ENCODE measurements at regions of chr15 and their contacts with region 1.

Region 1: GRCh38 chr15:89206908-89207331 is 14.5 kb downstream of the RLBP1 start:
- DNase-seq: peak; percentile 47
- ATAC-seq: peak; percentile 99
- H3K4me3 ChIP-seq: peak overlapping the region; percentile 28 to 50
- H3K27ac ChIP-seq: no peak overlapping the region
- H3K4me1 ChIP-seq: peaks cover 0 to 7% of the 10 kb centered on the region in 2 experiments; a peak in 2 of 4 replicates
- H3K27me3 ChIP-seq: no peaks in the 10 kb centered on the region
- CTCF ChIP-seq: peak; percentile 89 to 99 (median 96)
- POLR2A ChIP-seq: no peak
- RAD21 ChIP-seq: peak; percentile 91

Region 2: DNA sequence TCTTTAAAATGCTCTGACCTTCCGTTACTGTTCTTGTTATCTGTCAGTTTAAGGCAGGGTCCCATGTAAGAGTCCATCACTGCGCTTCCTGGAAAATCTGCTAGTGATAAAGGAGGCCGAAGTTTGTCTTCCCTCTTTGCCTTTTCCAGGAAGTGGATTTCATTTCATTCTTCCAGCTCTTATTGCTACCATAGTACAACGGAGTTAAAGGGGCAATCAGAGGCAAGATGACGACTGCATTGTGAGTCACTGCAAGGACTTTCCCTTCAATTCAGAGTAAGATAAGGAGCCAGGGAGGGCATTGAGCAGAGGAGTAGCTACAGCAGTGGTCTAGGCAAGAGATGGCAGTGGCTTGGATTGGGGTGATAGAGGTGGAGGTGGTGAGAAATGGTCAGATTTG is 643.3 kb before region 1 on chr15:
- CTCF ChIA-PET with region 1: no interaction called
- POLR2A ChIA-PET with region 1: no interaction called
- RAD21 ChIA-PET with region 1: no interaction called
- intact Hi-C with region 1: no loop called
- DNase-seq: no peak
- ATAC-seq: no peak
- H3K4me3 ChIP-seq: no peak overlapping the region
- H3K27ac ChIP-seq: no peak overlapping the region
- H3K4me1 ChIP-seq: no peaks in the 10 kb centered on the region
- H3K27me3 ChIP-seq: peaks cover 16% of the 10 kb centered on the region; the same call in 1 of the 2 replicates
- CTCF ChIP-seq: no peak
- POLR2A ChIP-seq: no peak
- RAD21 ChIP-seq: no peak

Region 3: GRCh38 chr15:88859550-88859949 is 347.4 kb before region 1 on chr15:
- CTCF ChIA-PET with region 1: no interaction called
- POLR2A ChIA-PET with region 1: no interaction called
- RAD21 ChIA-PET with region 1: no interaction called
- intact Hi-C with region 1: no loop called
- DNase-seq: no peak
- ATAC-seq: no peak
- H3K4me3 ChIP-seq: no peak overlapping the region
- H3K27ac ChIP-seq: no peak overlapping the region
- H3K4me1 ChIP-seq: no peaks in the 10 kb centered on the region
- H3K27me3 ChIP-seq: peaks cover 32% of the 10 kb centered on the region
- CTCF ChIP-seq: no peak
- POLR2A ChIP-seq: no peak
- RAD21 ChIP-seq: no peak

Region 4: GRCh38 chr15:89226359-89227221 is 19.7 kb after region 1 on chr15:
- CTCF ChIA-PET with region 1: interaction called, 12 read pairs
- POLR2A ChIA-PET with region 1: no interaction called
- RAD21 ChIA-PET with region 1: no interaction called
- intact Hi-C with region 1: no loop called
- DNase-seq: no peak
- ATAC-seq: peak; percentile 72
- H3K4me3 ChIP-seq: no peak overlapping the region
- H3K27ac ChIP-seq: no peak overlapping the region
- H3K4me1 ChIP-seq: peaks cover 0 to 12% of the 10 kb centered on the region in 2 experiments; a peak in 1 of 4 replicates
- H3K27me3 ChIP-seq: no peaks in the 10 kb centered on the region
- CTCF ChIP-seq: no peak
- POLR2A ChIP-seq: no peak
- RAD21 ChIP-seq: no peak

Region 5: DNA sequence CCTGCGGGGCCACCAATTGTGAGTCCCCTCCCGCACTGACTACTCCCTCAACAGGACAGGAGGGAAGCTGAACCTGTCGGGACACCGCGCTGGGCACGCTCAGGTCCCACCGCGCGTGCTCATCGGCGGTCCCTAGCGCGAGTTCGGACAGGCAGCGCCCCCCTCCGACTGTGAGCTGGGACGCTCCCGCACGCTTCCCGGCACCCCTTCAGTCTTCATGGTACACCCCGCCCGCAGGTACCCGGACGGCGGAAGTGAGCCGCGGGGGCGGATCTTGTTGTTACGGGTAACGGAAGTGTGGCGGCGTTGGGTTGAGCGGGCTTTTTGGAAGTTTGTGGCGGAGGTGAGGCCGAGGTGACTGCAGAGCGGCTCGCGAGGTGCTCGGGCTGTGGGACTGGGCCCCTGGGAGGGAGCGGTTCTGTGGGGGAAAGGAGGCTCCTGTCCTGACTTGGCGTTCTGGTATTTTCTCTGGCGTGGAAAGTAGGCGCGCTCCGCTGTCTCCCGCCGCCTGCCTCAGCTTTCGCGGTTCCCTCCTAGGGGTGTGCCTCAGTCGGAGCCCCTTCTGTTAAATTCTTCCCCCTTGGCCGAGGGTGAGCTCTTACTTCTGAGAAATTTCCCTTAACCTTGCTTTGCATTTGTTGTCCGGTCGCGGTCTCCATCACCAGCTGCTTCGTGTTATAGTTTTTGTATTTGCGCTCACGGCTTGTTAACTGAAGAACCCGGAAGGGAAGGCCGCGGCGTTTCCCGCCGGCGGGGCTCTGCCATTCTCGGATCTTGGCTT is 37.0 kb after region 1 on chr15 and contains the start of gene FANCI:
- CTCF ChIA-PET with region 1: interaction called, 20 read pairs
- POLR2A ChIA-PET with region 1: interaction called, 6 read pairs
- RAD21 ChIA-PET with region 1: interaction called, 6 to 10 read pairs
- intact Hi-C with region 1: loop called (anchors 2 kb)
- DNase-seq: peak; percentile 89
- ATAC-seq: peak; percentile 94
- H3K4me3 ChIP-seq: peak within 1 kb of the TSS; percentile 76 to 78
- H3K27ac ChIP-seq: peak within 1 kb of the TSS; percentile 79
- H3K4me1 ChIP-seq: peaks cover 4 to 17% of the 10 kb centered on the region in 2 experiments; a peak in 3 of 4 replicates
- H3K27me3 ChIP-seq: no peaks in the 10 kb centered on the region
- CTCF ChIP-seq: peak; percentile 48 to 71 (median 58); a peak in 4 of 6 replicates
- POLR2A ChIP-seq: peak; percentile 51
- RAD21 ChIP-seq: peak; percentile 73
- total RNA-seq, gene FANCI: 112 TPM

Region 6: GRCh38 chr15:89291934-89292438 is 85.1 kb after region 1 on chr15:
- CTCF ChIA-PET with region 1: interaction called, 10 read pairs
- POLR2A ChIA-PET with region 1: no interaction called
- RAD21 ChIA-PET with region 1: no interaction called
- intact Hi-C with region 1: no loop called
- DNase-seq: no peak
- ATAC-seq: no peak
- H3K4me3 ChIP-seq: no peak overlapping the region
- H3K27ac ChIP-seq: no peak overlapping the region
- H3K4me1 ChIP-seq: no peaks in the 10 kb centered on the region
- H3K27me3 ChIP-seq: no peaks in the 10 kb centered on the region
- CTCF ChIP-seq: no peak
- POLR2A ChIP-seq: no peak
- RAD21 ChIP-seq: no peak

Region 7: GRCh38 chr15:89299896-89300295 is 93.0 kb after region 1 on chr15:
- CTCF ChIA-PET with region 1: interaction called, 60 read pairs
- POLR2A ChIA-PET with region 1: no interaction called
- RAD21 ChIA-PET with region 1: interaction called, 3 to 4 read pairs
- intact Hi-C with region 1: loop called (anchors 1 kb)
- DNase-seq: peak; percentile 16
- ATAC-seq: peak; percentile 58; the same call in 1 of the 2 replicates
- H3K4me3 ChIP-seq: no peak overlapping the region
- H3K27ac ChIP-seq: no peak overlapping the region
- H3K4me1 ChIP-seq: no peaks in the 10 kb centered on the region
- H3K27me3 ChIP-seq: no peaks in the 10 kb centered on the region
- CTCF ChIP-seq: peak in 2 of 3 experiments; percentile 24 to 43; a peak in 2 of 6 replicates
- POLR2A ChIP-seq: no peak
- RAD21 ChIP-seq: peak; percentile 59

Region 8: GRCh38 chr15:89383365-89384175 is 176.7 kb after region 1 on chr15:
- CTCF ChIA-PET with region 1: no interaction called
- POLR2A ChIA-PET with region 1: no interaction called
- RAD21 ChIA-PET with region 1: no interaction called
- intact Hi-C with region 1: no loop called
- DNase-seq: no peak
- ATAC-seq: no peak
- H3K4me3 ChIP-seq: no peak overlapping the region
- H3K27ac ChIP-seq: no peak overlapping the region
- H3K4me1 ChIP-seq: peaks cover 3 to 5% of the 10 kb centered on the region in 2 experiments; a peak in 2 of 4 replicates
- H3K27me3 ChIP-seq: no peaks in the 10 kb centered on the region
- CTCF ChIP-seq: no peak
- POLR2A ChIP-seq: no peak
- RAD21 ChIP-seq: no peak